ENCODE measurements at regions of chr6 and their contacts with region 1.

Region 1: GRCh38 chr6:134161036-134161435 is 108.6 kb upstream of the SLC2A12 start:
- DNase-seq: no peak
- ATAC-seq: no peak
- H3K4me3 ChIP-seq: no peak overlapping the region
- H3K4me3 Mint-ChIP-seq: no peak overlapping the region
- H3K27ac ChIP-seq: no peak overlapping the region
- H3K27ac Mint-ChIP-seq: no peak overlapping the region
- H3K4me1 ChIP-seq: no peaks in the 10 kb centered on the region
- H3K4me1 Mint-ChIP-seq: no peaks in the 10 kb centered on the region
- H3K27me3 ChIP-seq: no peaks in the 10 kb centered on the region
- H3K27me3 Mint-ChIP-seq: no peaks in the 10 kb centered on the region
- CTCF ChIP-seq: no peak

Region 2: DNA sequence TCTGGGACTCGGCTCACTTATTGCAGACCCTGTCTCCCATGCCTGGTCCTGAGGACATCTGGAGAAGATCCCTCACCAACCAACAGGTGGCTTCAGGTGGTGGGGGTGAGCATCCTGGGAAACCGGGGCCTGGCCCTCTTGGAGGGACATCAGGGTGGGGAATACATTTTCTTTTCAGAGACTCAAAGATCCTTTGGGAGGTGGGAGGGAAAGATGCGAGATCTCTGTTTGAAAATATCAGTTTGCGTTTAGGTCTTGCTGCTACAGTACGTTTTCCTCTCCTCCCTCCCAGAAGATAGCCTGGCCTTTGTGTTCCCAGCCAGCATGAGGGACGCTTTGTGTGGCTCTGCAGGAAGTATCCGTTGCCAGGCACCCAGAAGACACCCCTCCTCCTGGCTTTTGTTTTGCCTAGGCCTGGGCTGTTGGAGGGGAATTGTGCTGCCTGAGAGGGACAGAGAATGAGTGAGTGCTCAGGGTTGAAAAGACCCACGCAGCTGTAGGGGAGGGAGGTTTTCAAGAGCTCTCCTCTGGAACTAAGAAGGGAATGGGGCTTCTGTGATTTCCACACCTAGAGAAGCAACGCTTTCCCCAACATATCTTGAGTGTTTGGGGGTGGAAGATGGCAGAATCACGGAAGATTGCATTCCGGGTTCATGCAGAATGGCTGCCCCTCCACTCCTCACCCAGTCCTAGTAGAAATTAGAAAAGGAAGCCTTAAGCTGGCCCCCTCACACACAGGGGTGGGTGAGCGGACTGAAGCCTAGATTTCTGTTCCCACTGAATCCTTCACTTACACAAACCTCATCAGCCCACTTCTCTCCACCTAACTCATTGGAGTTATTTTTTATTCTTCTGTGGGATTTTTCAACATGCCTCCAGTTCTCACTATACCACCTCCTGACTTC is 86.6 kb before region 1 on chr6:
- CTCF ChIA-PET with region 1: no interaction called
- POLR2A ChIA-PET with region 1: no interaction called
- intact Hi-C with region 1: no loop called
- DNase-seq: no peak
- ATAC-seq: no peak
- H3K4me3 ChIP-seq: no peak overlapping the region
- H3K4me3 Mint-ChIP-seq: no peak overlapping the region
- H3K27ac ChIP-seq: no peak overlapping the region
- H3K27ac Mint-ChIP-seq: no peak overlapping the region
- H3K4me1 ChIP-seq: peaks cover under 1% of the 10 kb centered on the region
- H3K4me1 Mint-ChIP-seq: no peaks in the 10 kb centered on the region
- H3K27me3 ChIP-seq: no peaks in the 10 kb centered on the region
- H3K27me3 Mint-ChIP-seq: no peaks in the 10 kb centered on the region
- CTCF ChIP-seq: no peak

Region 3: DNA sequence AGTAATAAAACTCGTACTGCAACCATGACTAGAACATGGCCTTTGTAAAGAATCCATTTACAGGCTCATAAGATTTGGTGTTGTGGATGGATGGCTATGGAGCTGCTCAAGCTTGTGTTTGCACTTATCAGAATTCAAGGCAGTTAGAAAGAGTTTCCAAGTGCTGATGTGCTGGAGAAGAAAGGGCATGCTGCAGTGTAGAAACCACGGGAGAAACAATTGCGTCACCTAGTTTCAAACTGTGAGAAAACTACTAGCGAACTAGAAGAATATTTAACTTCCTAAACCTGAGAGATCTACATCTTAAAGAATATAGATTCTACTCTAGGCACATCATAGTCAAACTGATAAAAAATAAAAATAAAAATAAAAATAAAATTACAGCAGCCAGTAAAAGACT is 40.7 kb after region 1 on chr6:
- CTCF ChIA-PET with region 1: no interaction called
- POLR2A ChIA-PET with region 1: no interaction called
- intact Hi-C with region 1: no loop called
- DNase-seq: no peak
- ATAC-seq: no peak
- H3K4me3 ChIP-seq: no peak overlapping the region
- H3K4me3 Mint-ChIP-seq: no peak overlapping the region
- H3K27ac ChIP-seq: no peak overlapping the region
- H3K27ac Mint-ChIP-seq: no peak overlapping the region
- H3K4me1 ChIP-seq: peaks cover 4% of the 10 kb centered on the region
- H3K4me1 Mint-ChIP-seq: peaks cover 5% of the 10 kb centered on the region
- H3K27me3 ChIP-seq: no peaks in the 10 kb centered on the region
- H3K27me3 Mint-ChIP-seq: no peaks in the 10 kb centered on the region
- CTCF ChIP-seq: no peak

Region 4: DNA sequence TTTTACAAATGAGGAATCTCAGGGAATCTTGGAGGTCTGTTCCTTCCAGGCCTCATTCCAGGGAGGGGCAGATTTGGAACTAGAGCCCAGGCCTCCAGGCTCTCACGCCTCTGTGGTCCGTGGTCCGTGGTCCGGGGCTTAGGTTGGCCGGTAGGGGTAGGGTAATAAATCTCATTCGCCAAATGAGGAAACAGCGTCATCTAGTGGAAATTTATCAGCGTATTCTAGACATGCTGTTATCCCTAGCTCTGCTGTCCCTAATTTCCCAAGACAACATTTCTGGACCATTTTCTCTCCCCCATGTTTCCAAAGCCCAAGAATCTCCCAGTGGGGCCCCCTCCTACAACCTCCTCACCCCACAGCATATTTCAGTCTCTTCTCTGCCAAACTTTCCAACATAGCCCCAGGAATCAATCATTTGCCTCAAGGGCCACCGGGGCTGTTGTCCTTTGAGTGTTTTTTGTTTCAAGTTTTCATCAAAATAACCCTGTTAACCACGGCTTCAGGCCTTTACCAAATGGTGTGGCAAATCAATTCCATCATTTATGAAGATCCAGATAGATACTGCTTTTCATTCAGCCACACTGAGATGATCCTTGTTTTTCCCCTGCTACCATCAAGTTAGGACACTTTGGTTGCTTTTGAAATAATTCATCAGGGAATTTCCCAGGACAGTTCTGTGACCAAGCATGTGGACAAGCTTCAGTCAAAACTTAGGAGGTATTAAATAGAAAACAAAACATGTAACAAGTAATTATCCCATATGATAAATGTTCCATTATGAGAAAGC is 662.1 kb after region 1 on chr6:
- CTCF ChIA-PET with region 1: interaction called, 25 read pairs
- POLR2A ChIA-PET with region 1: no interaction called
- intact Hi-C with region 1: loop called (anchors 1 kb)
- DNase-seq: peak in 6 of 14 experiments; percentile 3 to 81 (median 53)
- ATAC-seq: peak; percentile 74
- H3K4me3 ChIP-seq: no peak overlapping the region
- H3K4me3 Mint-ChIP-seq: no peak overlapping the region
- H3K27ac ChIP-seq: no peak overlapping the region
- H3K27ac Mint-ChIP-seq: no peak overlapping the region
- H3K4me1 ChIP-seq: no peaks in the 10 kb centered on the region
- H3K4me1 Mint-ChIP-seq: no peaks in the 10 kb centered on the region
- H3K27me3 ChIP-seq: no peaks in the 10 kb centered on the region
- H3K27me3 Mint-ChIP-seq: no peaks in the 10 kb centered on the region
- CTCF ChIP-seq: peak; percentile 72

Region 5: GRCh38 chr6:134882426-134883038 is 721.5 kb after region 1 on chr6:
- CTCF ChIA-PET with region 1: interaction called, 4 read pairs
- POLR2A ChIA-PET with region 1: no interaction called
- intact Hi-C with region 1: loop called (anchors 1 kb)
- DNase-seq: peak; percentile 11 to 74 (median 43)
- ATAC-seq: peak; percentile 65
- H3K4me3 ChIP-seq: no peak overlapping the region
- H3K4me3 Mint-ChIP-seq: no peak overlapping the region
- H3K27ac ChIP-seq: no peak overlapping the region
- H3K27ac Mint-ChIP-seq: no peak overlapping the region
- H3K4me1 ChIP-seq: no peaks in the 10 kb centered on the region
- H3K4me1 Mint-ChIP-seq: no peaks in the 10 kb centered on the region
- H3K27me3 ChIP-seq: peaks cover 0 to 4% of the 10 kb centered on the region in 2 experiments
- H3K27me3 Mint-ChIP-seq: peaks cover 19% of the 10 kb centered on the region
- CTCF ChIP-seq: peak; percentile 83

Region 6: DNA sequence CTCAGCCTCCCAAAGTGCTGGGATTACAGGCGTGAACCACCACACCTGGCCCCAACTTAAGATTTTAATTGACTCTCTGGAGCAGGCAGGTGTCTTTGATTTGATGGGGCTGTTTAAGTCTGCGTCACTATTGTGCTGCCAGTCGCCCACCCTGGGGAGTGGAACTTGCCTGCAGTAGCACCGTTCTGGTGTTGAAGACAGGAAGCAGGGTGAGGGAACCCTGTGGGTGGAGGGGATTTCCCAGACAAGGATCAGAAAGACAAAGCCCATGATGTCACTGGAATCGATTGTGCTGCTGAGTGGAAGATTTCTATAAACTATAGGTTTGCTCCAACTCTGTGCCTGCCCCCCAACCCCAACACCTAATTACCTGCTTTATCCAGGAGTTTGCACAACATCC is 777.9 kb after region 1 on chr6:
- CTCF ChIA-PET with region 1: interaction called, 19 read pairs
- POLR2A ChIA-PET with region 1: no interaction called
- intact Hi-C with region 1: loop called (anchors 1 kb)
- DNase-seq: peak in 9 of 14 experiments; percentile 2 to 74 (median 17)
- ATAC-seq: peak; percentile 91
- H3K4me3 ChIP-seq: no peak overlapping the region
- H3K4me3 Mint-ChIP-seq: no peak overlapping the region
- H3K27ac ChIP-seq: no peak overlapping the region
- H3K27ac Mint-ChIP-seq: no peak overlapping the region
- H3K4me1 ChIP-seq: peaks cover 6% of the 10 kb centered on the region
- H3K4me1 Mint-ChIP-seq: peaks cover 12% of the 10 kb centered on the region
- H3K27me3 ChIP-seq: no peaks in the 10 kb centered on the region
- H3K27me3 Mint-ChIP-seq: no peaks in the 10 kb centered on the region
- CTCF ChIP-seq: no peak

Region 7: DNA sequence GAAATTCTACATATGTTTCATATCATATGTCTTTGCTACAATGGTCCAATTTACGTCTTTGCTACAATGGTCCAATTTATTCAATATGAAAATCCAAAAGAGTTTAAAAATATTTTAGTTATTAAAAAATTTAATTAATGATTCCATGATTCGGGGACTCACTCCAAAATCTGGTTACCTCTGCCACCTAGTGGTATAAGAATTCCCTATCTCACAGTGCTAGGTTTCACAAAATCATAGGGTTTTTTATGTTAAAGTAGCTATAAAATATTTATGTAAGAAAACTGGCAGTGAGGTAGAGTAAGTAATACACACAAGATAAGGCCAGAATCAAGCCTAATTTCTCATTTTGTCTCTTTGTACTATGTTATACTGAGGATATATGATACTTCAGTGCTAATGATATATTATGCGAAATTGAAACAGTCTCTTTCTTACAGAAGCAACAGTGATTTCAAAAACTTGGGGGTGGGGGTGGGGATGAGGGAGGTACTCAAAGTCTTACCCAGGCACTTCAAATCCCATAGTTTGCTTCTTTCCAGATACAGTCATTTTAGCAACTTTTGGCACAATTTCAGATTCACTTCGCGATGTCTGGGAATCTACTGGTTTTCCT is 841.3 kb after region 1 on chr6:
- CTCF ChIA-PET with region 1: no interaction called
- POLR2A ChIA-PET with region 1: no interaction called
- intact Hi-C with region 1: loop called in 1 of 2 experiments (anchors 5 kb)
- DNase-seq: peak in 3 of 14 experiments; percentile 33 to 45 (median 34)
- ATAC-seq: no peak
- H3K4me3 ChIP-seq: no peak overlapping the region
- H3K4me3 Mint-ChIP-seq: no peak overlapping the region
- H3K27ac ChIP-seq: no peak overlapping the region
- H3K27ac Mint-ChIP-seq: no peak overlapping the region
- H3K4me1 ChIP-seq: no peaks in the 10 kb centered on the region
- H3K4me1 Mint-ChIP-seq: peaks cover 17% of the 10 kb centered on the region
- H3K27me3 ChIP-seq: no peaks in the 10 kb centered on the region
- H3K27me3 Mint-ChIP-seq: no peaks in the 10 kb centered on the region
- CTCF ChIP-seq: peak; percentile 69

Region 8: GRCh38 chr6:135195522-135195921 is 1034.5 kb after region 1 on chr6:
- CTCF ChIA-PET with region 1: no interaction called
- POLR2A ChIA-PET with region 1: no interaction called
- intact Hi-C with region 1: no loop called
- DNase-seq: no peak
- ATAC-seq: no peak
- H3K4me3 ChIP-seq: no peak overlapping the region
- H3K4me3 Mint-ChIP-seq: no peak overlapping the region
- H3K27ac ChIP-seq: no peak overlapping the region
- H3K27ac Mint-ChIP-seq: no peak overlapping the region
- H3K4me1 ChIP-seq: peaks cover 10% of the 10 kb centered on the region
- H3K4me1 Mint-ChIP-seq: peaks cover 27% of the 10 kb centered on the region
- H3K27me3 ChIP-seq: no peaks in the 10 kb centered on the region
- H3K27me3 Mint-ChIP-seq: no peaks in the 10 kb centered on the region
- CTCF ChIP-seq: no peak

Region 9: GRCh38 chr6:135438907-135439535 is 1278.0 kb after region 1 on chr6:
- CTCF ChIA-PET with region 1: no interaction called
- POLR2A ChIA-PET with region 1: no interaction called
- intact Hi-C with region 1: loop called (anchors 5 kb)
- DNase-seq: peak in 3 of 14 experiments; percentile 40 to 50 (median 50)
- ATAC-seq: peak; percentile 44
- H3K4me3 ChIP-seq: no peak overlapping the region
- H3K4me3 Mint-ChIP-seq: peak overlapping the region; percentile 30
- H3K27ac ChIP-seq: no peak overlapping the region
- H3K27ac Mint-ChIP-seq: peak overlapping the region; percentile 68
- H3K4me1 ChIP-seq: no peaks in the 10 kb centered on the region
- H3K4me1 Mint-ChIP-seq: peaks cover 21% of the 10 kb centered on the region
- H3K27me3 ChIP-seq: no peaks in the 10 kb centered on the region
- H3K27me3 Mint-ChIP-seq: no peaks in the 10 kb centered on the region
- CTCF ChIP-seq: peak; percentile 57

Measured in CD4-positive, alpha-beta T cell (primary cell).